ENCODE measurements at regions of chr4 and their contacts with region 1.

Region 1: GRCh38 chr4:1870578-1871443 is at the start of gene NSD2:
- DNase-seq: peak; percentile 96
- ATAC-seq: peak; percentile 60
- H3K4me3 Mint-ChIP-seq: peak within 1 kb of the TSS; percentile 99
- H3K27ac Mint-ChIP-seq: peak within 1 kb of the TSS; percentile 99
- H3K4me1 Mint-ChIP-seq: peaks cover 36% of the 10 kb centered on the region
- H3K27me3 Mint-ChIP-seq: no peaks in the 10 kb centered on the region
- total RNA-seq, gene NSD2: 194 to 232 TPM

Region 2: DNA sequence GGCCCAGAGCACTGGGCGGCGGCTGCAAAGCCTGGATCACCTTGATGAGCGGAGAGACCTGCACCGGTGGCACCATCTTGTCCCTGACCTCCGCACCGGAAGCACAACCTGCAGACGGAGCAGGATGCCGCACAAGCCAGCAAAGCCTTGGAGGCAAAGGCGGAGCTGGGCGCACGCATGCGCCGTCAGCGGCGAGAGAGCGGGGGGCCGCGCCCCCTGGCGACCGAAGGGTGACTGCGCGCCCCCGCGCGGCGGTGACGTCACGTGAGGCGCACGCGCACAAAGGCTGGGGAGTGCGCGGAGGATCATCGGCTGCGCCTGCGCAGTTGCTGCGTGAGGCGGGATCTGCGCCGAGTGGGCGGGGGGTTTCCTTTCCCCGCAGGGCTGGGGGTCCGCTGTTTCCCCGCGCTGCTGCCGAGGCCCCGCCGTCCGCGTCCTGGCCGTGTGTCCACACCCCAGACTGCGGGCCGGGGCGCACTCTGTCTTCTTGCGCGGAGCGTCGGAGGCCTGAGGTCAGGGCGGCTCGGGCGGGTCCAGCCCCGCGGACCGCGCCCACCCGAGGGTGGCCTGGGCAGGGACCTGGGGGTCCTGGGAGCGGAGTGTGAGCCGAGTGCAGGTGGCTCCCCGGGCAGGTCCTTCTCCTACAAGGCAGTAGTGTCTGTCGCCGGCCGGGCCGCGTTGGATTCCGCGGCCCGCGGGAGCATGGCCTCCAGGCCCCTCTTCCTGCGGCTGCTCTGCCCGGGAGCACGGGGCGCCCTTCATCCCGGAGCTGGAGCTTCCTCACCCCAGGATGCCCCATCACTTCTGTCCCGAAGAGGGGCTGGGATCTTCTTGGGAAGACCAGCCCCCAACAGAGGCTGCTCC is 1196.4 kb before region 1 on chr4 and contains the starts of genes ATP5ME and MYL5:
- CTCF ChIA-PET with region 1: no interaction called
- POLR2A ChIA-PET with region 1: no interaction called
- intact Hi-C with region 1: loop called in 1 of 2 experiments (anchors 10 kb)
- DNase-seq: peak; percentile 98
- ATAC-seq: peak; percentile 95
- H3K4me3 Mint-ChIP-seq: peak within 1 kb of the TSS; percentile 80
- H3K27ac Mint-ChIP-seq: peak within 1 kb of the TSS; percentile 84
- H3K4me1 Mint-ChIP-seq: peaks cover 13% of the 10 kb centered on the region
- H3K27me3 Mint-ChIP-seq: no peaks in the 10 kb centered on the region
- total RNA-seq, gene ATP5ME: 147 to 210 TPM
- total RNA-seq, gene MYL5: 13.7 to 16.4 TPM

Region 3: DNA sequence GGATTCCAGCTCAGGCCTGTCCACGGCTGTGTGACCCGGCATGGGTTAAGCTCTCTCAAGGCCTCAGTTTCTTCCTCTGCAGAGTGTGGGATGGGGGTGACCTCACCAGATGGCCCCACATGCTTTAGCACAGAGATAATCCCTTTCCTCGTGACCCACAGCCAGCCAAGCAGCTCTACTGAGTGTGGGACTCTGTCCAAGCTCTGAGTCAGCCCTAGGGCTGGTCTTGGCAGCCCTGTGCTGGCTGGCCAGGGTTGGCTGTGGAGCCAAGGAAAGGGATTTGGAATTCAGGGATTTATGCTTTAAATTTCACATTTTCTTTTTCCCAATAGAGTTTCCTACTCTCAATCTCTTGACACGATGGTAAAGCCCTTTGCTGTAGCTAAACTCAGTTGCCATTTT is 678.7 kb before region 1 on chr4:
- CTCF ChIA-PET with region 1: no interaction called
- POLR2A ChIA-PET with region 1: no interaction called
- intact Hi-C with region 1: no loop called
- DNase-seq: peak; percentile 1
- ATAC-seq: no peak
- H3K4me3 Mint-ChIP-seq: no peak overlapping the region
- H3K27ac Mint-ChIP-seq: no peak overlapping the region
- H3K4me1 Mint-ChIP-seq: peaks cover 2% of the 10 kb centered on the region
- H3K27me3 Mint-ChIP-seq: no peaks in the 10 kb centered on the region

Region 4: GRCh38 chr4:1346781-1347409 is 523.9 kb before region 1 on chr4 and contains the start of gene UVSSA:
- CTCF ChIA-PET with region 1: interaction called, 3 read pairs
- POLR2A ChIA-PET with region 1: no interaction called
- intact Hi-C with region 1: loop called in 1 of 2 experiments (anchors 1 kb)
- DNase-seq: peak; percentile 100
- ATAC-seq: peak; percentile 95
- H3K4me3 Mint-ChIP-seq: peak within 1 kb of the TSS; percentile 86
- H3K27ac Mint-ChIP-seq: peak within 1 kb of the TSS; percentile 87
- H3K4me1 Mint-ChIP-seq: peaks cover 47% of the 10 kb centered on the region
- H3K27me3 Mint-ChIP-seq: no peaks in the 10 kb centered on the region
- total RNA-seq, gene UVSSA: 14.8 to 18.1 TPM

Region 5: GRCh38 chr4:1721004-1721665 is 149.7 kb before region 1 on chr4 and contains the starts of genes TACC3 and TMEM129:
- CTCF ChIA-PET with region 1: no interaction called
- POLR2A ChIA-PET with region 1: interaction called, 3 read pairs
- intact Hi-C with region 1: loop called in 1 of 2 experiments (anchors 1 kb)
- DNase-seq: peak; percentile 96
- ATAC-seq: peak; percentile 81
- H3K4me3 Mint-ChIP-seq: peak within 1 kb of the TSS; percentile 96
- H3K27ac Mint-ChIP-seq: peak within 1 kb of the TSS; percentile 99
- H3K4me1 Mint-ChIP-seq: peaks cover 52% of the 10 kb centered on the region
- H3K27me3 Mint-ChIP-seq: no peaks in the 10 kb centered on the region
- total RNA-seq, gene TACC3: 197 to 206 TPM
- total RNA-seq, gene TMEM129: 13.7 to 14.6 TPM

Region 6: DNA sequence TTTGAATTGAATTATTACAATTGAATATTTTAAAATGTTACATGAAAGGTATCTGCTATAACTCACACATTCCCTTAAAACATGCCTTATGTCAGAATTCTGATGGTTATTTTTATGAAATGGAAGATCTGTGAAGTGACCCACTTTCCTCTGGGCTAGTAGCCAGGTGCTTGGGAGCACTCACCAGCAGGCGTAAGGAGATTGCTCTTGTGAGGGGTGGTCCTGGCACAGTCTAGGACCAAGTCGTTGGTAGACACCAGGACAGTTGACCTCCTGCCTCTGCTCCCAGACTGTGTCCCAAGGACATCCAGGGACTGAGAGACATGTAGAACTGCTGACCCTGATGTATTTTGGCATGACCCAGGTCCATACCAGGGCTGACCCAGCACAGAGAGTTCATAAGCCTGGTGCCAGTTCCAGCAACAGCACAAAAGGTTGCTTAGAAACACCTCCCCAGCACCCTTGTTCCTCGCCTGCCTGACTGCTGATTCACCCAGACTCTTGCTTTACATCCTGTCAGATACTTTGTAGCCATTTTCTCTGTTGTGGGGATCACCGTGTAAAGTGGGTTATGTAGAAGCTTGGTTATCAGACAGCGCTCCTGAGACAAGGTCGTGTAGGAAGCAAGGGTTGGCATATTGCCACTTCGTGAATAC is 89.5 kb after region 1 on chr4:
- CTCF ChIA-PET with region 1: no interaction called
- POLR2A ChIA-PET with region 1: no interaction called
- intact Hi-C with region 1: no loop called
- DNase-seq: no peak
- ATAC-seq: no peak
- H3K4me3 Mint-ChIP-seq: no peak overlapping the region
- H3K27ac Mint-ChIP-seq: no peak overlapping the region
- H3K4me1 Mint-ChIP-seq: peaks cover 2% of the 10 kb centered on the region
- H3K27me3 Mint-ChIP-seq: no peaks in the 10 kb centered on the region

Region 7: DNA sequence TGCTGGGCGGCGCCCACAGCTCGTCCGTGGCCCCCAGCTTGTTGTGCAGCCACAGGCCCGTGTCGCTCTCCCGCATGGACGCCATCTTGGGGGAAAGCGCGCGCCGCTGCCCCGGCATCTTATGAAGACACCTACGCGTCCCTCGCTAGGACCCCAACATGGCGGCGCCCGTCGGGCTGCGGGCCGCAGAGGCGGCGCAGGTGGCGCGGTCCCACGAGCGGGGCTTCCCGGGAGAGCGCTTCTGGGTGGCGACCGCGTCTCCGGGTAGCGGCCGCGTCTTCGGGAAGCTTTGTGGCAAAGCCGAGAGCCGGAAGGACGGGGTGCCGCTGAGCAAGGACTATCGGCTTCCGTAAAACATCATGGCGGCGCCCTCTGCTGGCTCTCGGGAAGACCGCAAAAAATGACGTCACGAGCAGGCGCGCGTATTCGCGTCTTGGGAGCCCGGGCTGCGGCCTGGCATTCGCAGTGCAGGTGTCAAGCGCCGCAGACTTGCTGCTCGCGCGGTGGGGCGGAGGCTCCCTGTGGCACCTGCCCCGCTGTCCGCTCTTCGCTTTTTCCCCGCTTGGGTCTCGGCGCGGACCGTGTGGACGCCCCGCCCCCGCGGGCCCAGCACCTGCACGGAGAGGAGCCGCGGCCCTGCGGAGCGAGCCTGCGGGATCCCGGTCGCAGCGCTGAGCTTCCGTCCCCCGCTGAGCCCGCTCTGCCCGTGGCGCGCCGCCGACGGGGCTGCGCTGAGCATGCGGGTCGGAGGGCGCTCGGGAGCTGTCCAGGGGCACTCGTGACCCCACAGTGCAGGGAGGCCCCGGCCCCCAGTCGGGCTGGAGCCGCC is 138.3 kb after region 1 on chr4 and contains the start of gene NELFA:
- CTCF ChIA-PET with region 1: no interaction called
- POLR2A ChIA-PET with region 1: no interaction called
- intact Hi-C with region 1: loop called in 1 of 2 experiments (anchors 1 kb)
- DNase-seq: peak; percentile 97
- ATAC-seq: peak; percentile 81
- H3K4me3 Mint-ChIP-seq: peak within 1 kb of the TSS; percentile 87
- H3K27ac Mint-ChIP-seq: peak within 1 kb of the TSS; percentile 90
- H3K4me1 Mint-ChIP-seq: peaks cover 34% of the 10 kb centered on the region
- H3K27me3 Mint-ChIP-seq: no peaks in the 10 kb centered on the region
- total RNA-seq, gene NELFA: 41.6 to 48.3 TPM

Region 8: GRCh38 chr4:2071912-2072867 is 201.4 kb after region 1 on chr4:
- CTCF ChIA-PET with region 1: no interaction called
- POLR2A ChIA-PET with region 1: no interaction called
- intact Hi-C with region 1: no loop called
- DNase-seq: no peak
- ATAC-seq: no peak
- H3K4me3 Mint-ChIP-seq: no peak overlapping the region
- H3K27ac Mint-ChIP-seq: no peak overlapping the region
- H3K4me1 Mint-ChIP-seq: no peaks in the 10 kb centered on the region
- H3K27me3 Mint-ChIP-seq: no peaks in the 10 kb centered on the region

Region 9: GRCh38 chr4:2141762-2142451 is 271.1 kb after region 1 on chr4:
- CTCF ChIA-PET with region 1: no interaction called
- POLR2A ChIA-PET with region 1: no interaction called
- intact Hi-C with region 1: no loop called
- DNase-seq: peak; percentile 37
- ATAC-seq: peak; percentile 88
- H3K4me3 Mint-ChIP-seq: peak overlapping the region; percentile 9
- H3K27ac Mint-ChIP-seq: peak overlapping the region; percentile 75
- H3K4me1 Mint-ChIP-seq: peaks cover 24% of the 10 kb centered on the region
- H3K27me3 Mint-ChIP-seq: no peaks in the 10 kb centered on the region

Region 10: DNA sequence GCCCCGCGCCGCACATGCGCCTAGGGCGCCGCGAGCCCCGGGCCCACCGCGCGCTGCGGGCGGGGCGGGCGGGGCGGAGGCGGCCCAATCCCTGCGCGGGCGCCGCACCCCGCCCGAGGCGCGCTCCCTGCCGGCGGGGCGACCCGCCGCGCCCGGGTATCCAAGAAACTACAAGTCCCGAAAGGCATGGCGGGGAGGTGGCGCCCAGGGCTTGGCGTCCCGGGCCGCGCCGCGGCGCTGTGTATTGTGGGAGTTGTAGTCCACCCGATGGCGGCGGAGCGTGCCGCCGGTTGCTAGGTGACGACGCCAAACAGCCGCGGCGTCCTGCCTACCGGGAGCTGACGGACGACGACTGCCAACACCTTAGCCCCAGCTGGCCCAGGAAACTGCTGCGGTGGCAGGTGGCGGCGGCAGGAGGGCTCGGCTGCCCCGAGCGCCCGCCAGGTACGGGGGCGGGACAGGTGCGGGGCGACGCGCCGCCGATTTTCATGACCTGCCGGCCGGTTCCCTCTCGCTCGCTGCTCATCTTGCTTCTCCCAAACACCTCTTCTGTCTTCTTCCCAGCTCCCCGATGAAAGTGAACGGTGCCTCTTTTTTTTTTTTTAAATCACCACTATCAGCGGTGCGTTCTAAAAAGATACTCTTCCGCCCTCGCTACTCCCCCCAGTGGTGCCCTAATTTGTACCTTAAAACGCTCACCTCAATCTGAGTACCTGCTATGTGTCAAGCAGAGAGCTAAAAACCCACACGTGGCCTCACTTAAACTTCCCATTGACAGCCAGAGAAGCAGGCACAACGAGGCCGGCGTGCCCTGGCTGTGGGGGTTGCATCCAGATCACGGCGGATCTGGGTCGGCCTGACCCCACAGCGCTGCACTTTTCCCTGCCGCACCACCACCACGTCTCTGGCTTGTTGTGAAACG is 548.1 kb after region 1 on chr4 and contains the start of gene CFAP99:
- CTCF ChIA-PET with region 1: no interaction called
- POLR2A ChIA-PET with region 1: no interaction called
- intact Hi-C with region 1: loop called in 1 of 2 experiments (anchors 2 kb)
- DNase-seq: peak; percentile 99
- ATAC-seq: peak; percentile 93
- H3K4me3 Mint-ChIP-seq: peak within 1 kb of the TSS; percentile 82
- H3K27ac Mint-ChIP-seq: peak within 1 kb of the TSS; percentile 68
- H3K4me1 Mint-ChIP-seq: peaks cover 39% of the 10 kb centered on the region
- H3K27me3 Mint-ChIP-seq: peaks cover 27% of the 10 kb centered on the region
- total RNA-seq, gene CFAP99: 0.05 TPM in 1 of 2 experiments, not detected in the other

Region 11: DNA sequence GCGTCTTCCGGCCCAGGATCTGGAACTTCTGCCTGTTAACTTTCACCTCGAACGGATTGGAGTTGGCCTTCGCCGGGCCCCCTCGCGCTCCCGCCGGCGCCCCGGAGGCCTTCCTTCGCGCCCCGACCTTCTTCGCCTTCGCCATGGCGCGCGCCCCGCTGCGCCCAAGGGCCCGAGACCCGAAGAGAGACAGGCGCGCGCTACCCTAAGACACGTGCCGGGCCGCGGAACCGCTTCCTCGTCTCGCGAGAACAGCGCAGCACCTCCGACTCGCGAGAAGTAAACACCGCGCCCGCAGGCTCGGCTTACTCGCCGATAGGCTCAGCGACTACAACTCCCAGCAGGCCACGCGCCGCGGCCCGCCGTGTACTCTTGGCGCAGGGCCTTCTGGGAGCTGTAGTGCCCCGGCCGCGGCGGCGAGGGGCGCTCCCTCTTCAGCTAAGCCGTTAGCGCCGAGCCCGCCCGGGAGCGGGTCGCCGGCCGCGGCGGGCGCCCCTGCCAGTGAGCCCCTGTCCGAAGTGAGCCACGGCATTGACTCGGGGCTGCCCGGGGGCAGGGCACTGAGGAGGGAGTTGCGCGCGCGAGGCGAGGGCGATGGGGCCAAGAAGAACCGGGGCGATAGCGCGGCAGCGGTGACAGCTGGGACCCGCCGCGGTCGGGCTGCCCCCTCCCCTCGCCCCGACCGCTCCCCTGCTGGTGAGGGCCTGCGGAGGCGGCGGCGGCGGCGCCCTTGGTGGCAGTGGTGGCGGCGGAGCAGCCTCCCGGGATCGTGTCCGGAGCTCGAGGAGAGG is 1092.6 kb after region 1 on chr4 and contains the starts of genes GRK4 and NOP14:
- CTCF ChIA-PET with region 1: no interaction called
- POLR2A ChIA-PET with region 1: no interaction called
- intact Hi-C with region 1: loop called in 1 of 2 experiments (anchors 2 kb)
- DNase-seq: peak; percentile 99
- ATAC-seq: peak; percentile 87
- H3K4me3 Mint-ChIP-seq: peak within 1 kb of the TSS; percentile 83
- H3K27ac Mint-ChIP-seq: peak within 1 kb of the TSS; percentile 86
- H3K4me1 Mint-ChIP-seq: peaks cover 34% of the 10 kb centered on the region
- H3K27me3 Mint-ChIP-seq: no peaks in the 10 kb centered on the region
- total RNA-seq, gene GRK4: 2.4 to 2.5 TPM
- total RNA-seq, gene NOP14: 86.8 to 106 TPM